Activated B cell treated with CpG ODN at 0.5 μM for 24 hours (primary cell): ENCODE measurements at regions of chr5 and their contacts with region 1.

Region 1: GRCh38 chr5:141968914-141969608 is at the start of gene RNF14:
- DNase-seq: peak; percentile 93
- ATAC-seq: peak; percentile 89
- H3K4me3 Mint-ChIP-seq: peak within 1 kb of the TSS; percentile 91
- H3K27ac Mint-ChIP-seq: peak within 1 kb of the TSS; percentile 91
- H3K4me1 Mint-ChIP-seq: peaks cover 46% of the 10 kb centered on the region
- H3K27me3 Mint-ChIP-seq: no peaks in the 10 kb centered on the region
- CTCF ChIP-seq: peak; percentile 41
- total RNA-seq, gene RNF14: 30.0 and 30.4 TPM in 2 replicates

Region 2: DNA sequence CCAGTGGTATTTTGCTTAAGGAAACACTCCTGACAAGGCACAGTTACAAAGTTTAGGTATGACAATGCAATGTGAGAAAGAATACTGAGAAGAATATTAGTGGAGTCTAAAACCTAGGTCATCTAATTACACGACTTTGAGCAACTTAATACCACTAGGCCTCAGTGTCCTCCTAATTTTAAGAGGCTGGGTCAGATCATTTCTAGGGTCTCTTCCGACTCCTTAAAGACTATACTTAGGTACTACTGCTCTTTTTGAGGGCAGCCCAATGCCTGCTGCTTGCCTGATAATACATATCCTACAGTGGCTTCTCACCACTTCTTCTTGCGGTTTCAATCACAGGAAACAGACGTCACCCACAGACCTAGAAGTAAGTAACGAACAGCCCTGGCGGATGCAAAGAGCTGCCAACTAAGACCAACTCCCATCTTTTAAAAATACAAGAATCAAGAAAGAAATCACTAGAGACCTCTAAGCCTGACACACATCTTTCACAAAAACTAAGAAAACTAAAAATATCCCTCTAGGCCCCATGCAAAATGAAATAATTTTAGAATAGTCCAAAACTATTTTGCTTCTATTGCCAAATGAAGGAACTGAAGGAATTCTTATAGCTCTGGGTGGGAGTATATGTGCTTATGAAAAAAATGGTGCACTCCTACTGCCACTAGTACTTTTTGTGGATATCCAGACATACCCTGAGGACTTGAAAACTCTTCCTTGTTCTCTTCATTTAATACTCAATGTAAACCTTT is 363.4 kb before region 1 on chr5:
- CTCF ChIA-PET with region 1: no interaction called
- POLR2A ChIA-PET with region 1: no interaction called
- intact Hi-C with region 1: no loop called
- DNase-seq: no peak
- ATAC-seq: peak; percentile 97
- H3K4me3 Mint-ChIP-seq: peak overlapping the region; percentile 76
- H3K27ac Mint-ChIP-seq: peak overlapping the region; percentile 93
- H3K4me1 Mint-ChIP-seq: peaks cover 84% of the 10 kb centered on the region
- H3K27me3 Mint-ChIP-seq: no peaks in the 10 kb centered on the region
- CTCF ChIP-seq: no peak

Region 3: GRCh38 chr5:141691867-141692532 is 277.1 kb before region 1 on chr5:
- CTCF ChIA-PET with region 1: interaction called, 20 read pairs
- POLR2A ChIA-PET with region 1: interaction called, 7 read pairs
- intact Hi-C with region 1: loop called (anchors 2 kb)
- DNase-seq: peak; percentile 83
- ATAC-seq: peak; percentile 98
- H3K4me3 Mint-ChIP-seq: peak overlapping the region; percentile 47
- H3K27ac Mint-ChIP-seq: no peak overlapping the region
- H3K4me1 Mint-ChIP-seq: peaks cover 11% of the 10 kb centered on the region
- H3K27me3 Mint-ChIP-seq: peaks cover 52% of the 10 kb centered on the region
- CTCF ChIP-seq: peak; percentile 81

Region 4: GRCh38 chr5:141923448-141924352 is 45.4 kb before region 1 on chr5 and contains the start of gene DELE1:
- CTCF ChIA-PET with region 1: interaction called, 4 read pairs
- POLR2A ChIA-PET with region 1: interaction called, 47 read pairs
- intact Hi-C with region 1: loop called (anchors 1 kb)
- DNase-seq: peak; percentile 84
- ATAC-seq: peak; percentile 96
- H3K4me3 Mint-ChIP-seq: peak within 1 kb of the TSS; percentile 91
- H3K27ac Mint-ChIP-seq: peak within 1 kb of the TSS; percentile 95
- H3K4me1 Mint-ChIP-seq: peaks cover 23% of the 10 kb centered on the region
- H3K27me3 Mint-ChIP-seq: no peaks in the 10 kb centered on the region
- CTCF ChIP-seq: no peak
- total RNA-seq, gene DELE1: 95.0 and 114 TPM in 2 replicates

Region 5: GRCh38 chr5:142024771-142025304 is 55.8 kb after region 1 on chr5:
- CTCF ChIA-PET with region 1: no interaction called
- POLR2A ChIA-PET with region 1: interaction called, 11 read pairs
- intact Hi-C with region 1: no loop called
- DNase-seq: peak; percentile 65
- ATAC-seq: peak; percentile 100
- H3K4me3 Mint-ChIP-seq: peak overlapping the region; percentile 92
- H3K27ac Mint-ChIP-seq: peak overlapping the region; percentile 97
- H3K4me1 Mint-ChIP-seq: peaks cover 13% of the 10 kb centered on the region
- H3K27me3 Mint-ChIP-seq: peaks cover 25% of the 10 kb centered on the region
- CTCF ChIP-seq: no peak

Region 6: DNA sequence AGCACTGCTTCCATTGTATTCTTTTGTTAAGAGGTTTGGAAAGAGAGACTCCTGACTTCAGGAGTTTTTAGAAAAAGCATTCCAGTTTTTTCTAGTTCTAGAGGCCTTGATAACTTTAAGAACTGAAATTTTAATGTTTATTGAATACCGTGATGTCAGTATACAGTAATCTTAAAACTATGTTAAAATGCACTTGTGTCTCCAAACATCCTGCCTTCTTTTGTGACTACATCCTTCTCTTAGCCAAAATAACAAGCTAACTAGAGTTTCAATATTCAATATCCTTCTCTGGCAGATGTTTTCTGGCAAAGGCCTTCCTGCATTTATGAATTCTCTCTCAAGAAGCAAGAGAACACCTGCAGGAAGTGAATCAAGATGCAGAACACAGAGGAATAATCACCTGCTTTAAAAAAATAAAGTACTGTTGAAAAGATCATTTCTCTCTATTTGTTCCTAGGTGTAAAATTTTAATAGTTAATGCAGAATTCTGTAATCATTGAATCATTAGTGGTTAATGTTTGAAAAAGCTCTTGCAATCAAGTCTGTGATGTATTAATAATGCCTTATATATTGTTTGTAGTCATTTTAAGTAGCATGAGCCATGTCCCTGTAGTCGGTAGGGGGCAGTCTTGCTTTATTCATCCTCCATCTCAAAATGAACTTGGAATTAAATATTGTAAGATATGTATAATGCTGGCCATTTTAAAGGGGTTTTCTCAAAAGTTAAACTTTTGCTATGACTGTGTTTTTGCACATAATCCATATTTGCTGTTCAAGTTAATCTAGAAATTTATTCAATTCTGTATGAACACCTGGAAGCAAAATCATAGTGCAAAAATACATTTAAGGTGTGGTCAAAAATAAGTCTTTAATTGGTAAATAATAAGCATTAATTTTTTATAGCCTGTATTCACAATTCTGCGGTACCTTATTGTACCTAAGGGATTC is 182.6 kb after region 1 on chr5:
- CTCF ChIA-PET with region 1: no interaction called
- POLR2A ChIA-PET with region 1: no interaction called
- intact Hi-C with region 1: no loop called
- DNase-seq: no peak
- ATAC-seq: peak; percentile 37
- H3K4me3 Mint-ChIP-seq: no peak overlapping the region
- H3K27ac Mint-ChIP-seq: no peak overlapping the region
- H3K4me1 Mint-ChIP-seq: no peaks in the 10 kb centered on the region
- H3K27me3 Mint-ChIP-seq: no peaks in the 10 kb centered on the region
- CTCF ChIP-seq: peak; percentile 44

Region 7: GRCh38 chr5:142356716-142357473 is 387.8 kb after region 1 on chr5:
- CTCF ChIA-PET with region 1: interaction called, 3 read pairs
- POLR2A ChIA-PET with region 1: interaction called, 7 read pairs
- intact Hi-C with region 1: loop called (anchors 1 kb)
- DNase-seq: peak; percentile 80
- ATAC-seq: peak; percentile 84
- H3K4me3 Mint-ChIP-seq: peak overlapping the region; percentile 83
- H3K27ac Mint-ChIP-seq: peak overlapping the region; percentile 79
- H3K4me1 Mint-ChIP-seq: peaks cover 40% of the 10 kb centered on the region
- H3K27me3 Mint-ChIP-seq: peaks cover 5% of the 10 kb centered on the region
- CTCF ChIP-seq: no peak